K562 (cell line): ENCODE measurements at regions of chr7 and their contacts with region 1.

Region 1: DNA sequence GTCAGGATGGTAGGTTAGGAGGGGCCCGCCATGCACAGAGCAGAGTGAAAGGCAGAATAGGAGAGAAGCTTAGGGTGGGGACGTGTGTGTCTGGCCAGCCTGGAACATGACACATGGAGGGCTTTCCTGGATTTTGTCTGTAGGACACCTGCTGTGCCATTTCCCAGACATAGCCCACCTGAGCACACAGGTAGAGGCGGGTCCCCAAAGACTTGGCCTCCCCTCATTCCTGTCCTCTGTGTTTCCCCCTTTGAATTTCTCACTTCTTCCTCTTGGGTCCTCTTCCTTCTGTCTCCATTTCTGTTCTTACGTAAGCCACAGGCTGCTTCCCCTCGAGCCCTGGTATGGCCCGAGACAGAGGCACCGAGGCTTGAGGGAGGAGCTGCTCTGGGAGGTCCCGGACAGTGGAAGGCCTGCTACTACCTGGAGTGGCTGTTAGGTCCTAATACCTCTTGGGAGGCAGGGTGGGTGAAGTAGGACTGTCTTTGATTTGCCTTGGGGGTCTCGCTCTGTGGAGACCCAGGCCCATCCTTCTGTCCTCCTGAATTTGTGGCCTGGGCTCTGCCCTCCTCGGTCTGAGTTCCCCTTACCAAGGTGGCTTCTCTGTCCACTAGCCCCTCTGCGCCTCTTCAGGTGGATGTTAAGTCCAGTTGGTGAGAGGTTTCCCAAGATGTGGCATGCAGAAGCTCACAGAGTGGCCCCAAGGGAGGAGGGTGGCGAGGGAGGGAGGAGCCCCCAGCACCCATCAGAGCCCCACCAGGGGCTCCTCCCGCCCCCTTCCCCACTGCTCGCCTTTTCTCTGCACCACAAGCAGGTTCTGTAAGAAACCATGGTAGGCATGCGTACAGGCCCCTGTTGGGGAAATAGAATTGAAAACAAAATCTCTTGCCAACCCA is 5.5 kb downstream of the ZNF775 start:
- DNase-seq: no peak
- ATAC-seq: no peak
- H3K4me3 ChIP-seq: no peak overlapping the region
- H3K27ac ChIP-seq: no peak overlapping the region
- H3K4me1 ChIP-seq: peaks cover 9 to 41% of the 10 kb centered on the region in 2 experiments
- H3K27me3 ChIP-seq: no peaks in the 10 kb centered on the region
- CTCF ChIP-seq: no peak
- EP300 ChIP-seq: no peak
- POLR2A ChIP-seq: no peak
- RAD21 ChIP-seq: no peak

Region 2: DNA sequence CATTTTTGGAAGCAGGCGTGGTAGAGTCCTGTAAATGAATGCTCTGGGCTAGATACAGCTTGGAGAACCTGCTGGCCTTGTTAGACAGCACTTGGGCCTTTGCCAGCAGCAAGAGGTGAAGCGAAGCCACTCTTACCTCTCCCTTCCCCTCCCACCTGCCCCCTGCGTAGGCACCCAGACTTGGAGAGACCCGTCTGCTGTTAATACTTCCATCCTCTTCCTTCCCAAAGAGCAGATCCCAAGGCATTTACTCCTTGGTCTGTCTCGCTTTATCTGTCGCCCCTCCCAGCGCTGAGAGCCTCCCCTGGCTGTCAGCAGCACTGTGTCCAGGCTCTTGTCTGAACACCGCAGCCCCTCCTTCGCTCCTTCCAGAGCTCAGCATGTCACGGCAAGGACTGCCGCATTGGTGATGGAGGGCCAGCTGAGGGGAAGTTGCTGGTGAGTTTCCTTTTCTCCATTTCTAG is 11.3 kb before region 1 on chr7:
- CTCF ChIA-PET with region 1: no interaction called
- POLR2A ChIA-PET with region 1: interaction called, 17 read pairs
- in situ Hi-C with region 1: no loop called
- intact Hi-C with region 1: no loop called
- DNase-seq: peak in 2 of 4 experiments; percentile 72 to 78
- ATAC-seq: peak; percentile 64
- H3K4me3 ChIP-seq: no peak overlapping the region
- H3K27ac ChIP-seq: 0 out of 3 replicates have a peak overlapping the region, but pooled peaks have one; percentile 12
- H3K4me1 ChIP-seq: peaks cover 47 to 58% of the 10 kb centered on the region in 2 experiments
- H3K27me3 ChIP-seq: no peaks in the 10 kb centered on the region
- CTCF ChIP-seq: no peak
- EP300 ChIP-seq: no peak
- POLR2A ChIP-seq: no peak
- RAD21 ChIP-seq: no peak

Region 3: DNA sequence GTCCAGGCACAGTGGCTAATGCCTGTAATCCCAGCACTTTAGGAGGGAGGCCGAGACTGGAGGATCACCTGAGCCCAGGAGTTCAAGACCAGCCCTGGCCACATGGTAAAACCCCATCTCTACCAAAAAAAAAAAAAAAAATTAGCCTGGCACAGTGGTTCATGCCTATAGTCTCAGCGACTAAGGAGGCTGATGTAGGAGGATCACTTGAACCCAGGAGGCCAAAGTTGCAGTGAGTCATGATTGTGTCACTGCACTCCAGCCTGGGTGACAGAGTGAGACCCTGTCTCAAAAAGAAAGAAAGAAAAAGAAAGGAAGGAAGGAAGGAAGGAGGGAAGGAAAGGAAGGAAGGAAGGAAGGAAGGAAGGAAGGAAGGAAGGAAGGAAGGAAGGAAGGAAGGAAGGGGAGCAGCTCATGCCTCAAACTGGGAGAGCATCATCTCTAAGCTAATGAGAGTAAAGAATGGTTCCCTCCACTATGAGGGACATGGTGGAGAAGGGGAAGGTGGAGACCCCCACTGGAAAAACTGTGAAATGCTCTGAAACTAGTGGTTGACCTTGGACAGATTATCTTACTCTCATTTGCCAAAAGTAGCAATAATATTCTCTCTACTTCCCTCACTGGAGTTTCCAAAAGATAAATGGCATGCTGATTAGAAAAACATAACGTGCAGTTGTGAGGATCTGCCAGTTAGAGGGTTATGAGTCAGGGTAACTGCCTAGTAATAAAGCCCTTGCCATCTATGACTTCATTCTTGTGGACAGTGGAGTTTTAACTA is 369.4 kb after region 1 on chr7:
- CTCF ChIA-PET with region 1: no interaction called
- POLR2A ChIA-PET with region 1: no interaction called
- in situ Hi-C with region 1: no loop called
- intact Hi-C with region 1: no loop called
- DNase-seq: peak in 3 of 4 experiments; percentile 25 to 56 (median 39)
- ATAC-seq: peak; percentile 92
- H3K4me3 ChIP-seq: no peak overlapping the region
- H3K27ac ChIP-seq: no peak overlapping the region
- H3K4me1 ChIP-seq: no peaks in the 10 kb centered on the region
- H3K27me3 ChIP-seq: peaks cover 5 to 17% of the 10 kb centered on the region in 2 experiments
- CTCF ChIP-seq: peak; percentile 71 to 82 (median 73)
- EP300 ChIP-seq: no peak
- POLR2A ChIP-seq: no peak
- RAD21 ChIP-seq: peak; percentile 73 to 81